Common myeloid progenitor, CD34-positive (primary cell): ENCODE measurements at regions of chr2 and their contacts with region 1.

Region 1: GRCh38 chr2:172931918-172932520 is 143.6 kb upstream of the MAP3K20 start:
- DNase-seq: peak; percentile 72 to 88 (median 82)
- H3K4me3 ChIP-seq: peak overlapping the region in 1 of 7 experiments; percentile 28
- H3K27ac ChIP-seq: no peak overlapping the region
- H3K4me1 ChIP-seq: peaks cover 2 to 7% (median 7%) of the 10 kb centered on the region in 4 experiments
- H3K27me3 ChIP-seq: peaks cover 0 to 2% (median 0%) of the 10 kb centered on the region in 5 experiments

Region 2: GRCh38 chr2:172629586-172629985 is 302.4 kb before region 1 on chr2:
- CTCF ChIA-PET with region 1: no interaction called
- POLR2A ChIA-PET with region 1: no interaction called
- DNase-seq: no peak
- H3K4me3 ChIP-seq: no peak overlapping the region
- H3K27ac ChIP-seq: no peak overlapping the region
- H3K4me1 ChIP-seq: no peaks in the 10 kb centered on the region
- H3K27me3 ChIP-seq: peaks cover 0 to 3% (median 0%) of the 10 kb centered on the region in 5 experiments

Region 3: GRCh38 chr2:172806493-172806892 is 125.5 kb before region 1 on chr2:
- CTCF ChIA-PET with region 1: interaction called, 43 read pairs
- POLR2A ChIA-PET with region 1: no interaction called
- DNase-seq: peak; percentile 42 to 59 (median 54)
- H3K4me3 ChIP-seq: no peak overlapping the region
- H3K27ac ChIP-seq: no peak overlapping the region
- H3K4me1 ChIP-seq: peaks cover 0 to 3% (median 0%) of the 10 kb centered on the region in 4 experiments
- H3K27me3 ChIP-seq: peaks cover 0 to 6% (median 3%) of the 10 kb centered on the region in 5 experiments

Region 4: GRCh38 chr2:172921532-172922236 is 10.3 kb before region 1 on chr2:
- CTCF ChIA-PET with region 1: interaction called, 28 read pairs
- POLR2A ChIA-PET with region 1: no interaction called
- DNase-seq: no peak
- H3K4me3 ChIP-seq: no peak overlapping the region
- H3K27ac ChIP-seq: no peak overlapping the region
- H3K4me1 ChIP-seq: no peaks in the 10 kb centered on the region
- H3K27me3 ChIP-seq: peaks cover 0 to 4% (median 0%) of the 10 kb centered on the region in 5 experiments

Region 5: GRCh38 chr2:172943539-172943938 is 11.5 kb after region 1 on chr2:
- CTCF ChIA-PET with region 1: interaction called, 11 read pairs
- POLR2A ChIA-PET with region 1: no interaction called
- DNase-seq: no peak
- H3K4me3 ChIP-seq: no peak overlapping the region
- H3K27ac ChIP-seq: no peak overlapping the region
- H3K4me1 ChIP-seq: peaks cover 0 to 17% (median 0%) of the 10 kb centered on the region in 4 experiments
- H3K27me3 ChIP-seq: peaks cover 0 to 10% (median 0%) of the 10 kb centered on the region in 5 experiments